ENCODE measurements at regions of chr1 and their contacts with region 1.

Region 1: GRCh38 chr1:31762726-31763670 is 1.1 kb downstream of the ADGRB2 start:
- DNase-seq: peak; percentile 88

Region 2: DNA sequence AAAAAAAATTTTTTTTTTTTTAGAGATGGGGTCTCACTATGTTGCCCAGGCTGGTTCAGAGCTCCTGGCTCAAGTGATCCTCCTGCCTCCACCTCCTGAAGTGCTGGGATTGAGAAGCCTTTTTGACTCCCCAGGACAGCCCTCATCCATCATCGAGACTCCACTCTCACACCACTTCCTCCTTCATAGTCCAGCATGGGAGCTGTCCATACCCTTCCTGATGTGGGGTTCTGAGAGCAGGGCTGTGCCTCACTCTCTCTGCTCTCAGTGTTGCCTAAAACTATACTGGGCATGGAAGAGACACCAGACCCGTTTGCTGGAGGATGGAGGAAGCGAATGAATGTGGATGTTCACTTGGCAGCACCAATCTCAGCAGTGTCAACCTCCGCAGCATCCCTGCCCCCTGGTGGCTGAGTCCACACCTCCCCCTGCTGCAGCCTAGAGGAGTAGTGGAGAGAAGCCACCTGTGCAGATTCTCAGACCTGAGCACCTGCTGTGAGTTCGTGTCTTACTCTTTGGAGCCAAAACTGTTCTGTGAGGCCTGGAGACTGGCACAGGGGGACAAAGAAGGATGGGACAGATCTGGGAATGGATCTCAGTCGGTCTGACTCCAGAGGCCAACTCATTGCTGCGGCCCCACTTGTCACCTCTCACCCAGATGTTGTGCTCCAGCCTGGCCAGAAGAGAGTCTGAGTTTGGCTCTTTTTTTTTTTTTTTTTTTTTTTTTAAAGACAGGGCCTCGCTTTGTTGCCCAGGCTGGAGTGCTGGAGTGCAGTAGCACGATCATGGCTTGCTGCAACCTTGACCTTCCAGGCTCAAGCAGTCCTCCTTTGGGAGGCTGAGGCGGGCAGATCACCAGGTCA is 169.0 kb before region 1 on chr1:
- CTCF ChIA-PET with region 1: no interaction called
- POLR2A ChIA-PET with region 1: no interaction called
- DNase-seq: peak; percentile 91

Region 3: DNA sequence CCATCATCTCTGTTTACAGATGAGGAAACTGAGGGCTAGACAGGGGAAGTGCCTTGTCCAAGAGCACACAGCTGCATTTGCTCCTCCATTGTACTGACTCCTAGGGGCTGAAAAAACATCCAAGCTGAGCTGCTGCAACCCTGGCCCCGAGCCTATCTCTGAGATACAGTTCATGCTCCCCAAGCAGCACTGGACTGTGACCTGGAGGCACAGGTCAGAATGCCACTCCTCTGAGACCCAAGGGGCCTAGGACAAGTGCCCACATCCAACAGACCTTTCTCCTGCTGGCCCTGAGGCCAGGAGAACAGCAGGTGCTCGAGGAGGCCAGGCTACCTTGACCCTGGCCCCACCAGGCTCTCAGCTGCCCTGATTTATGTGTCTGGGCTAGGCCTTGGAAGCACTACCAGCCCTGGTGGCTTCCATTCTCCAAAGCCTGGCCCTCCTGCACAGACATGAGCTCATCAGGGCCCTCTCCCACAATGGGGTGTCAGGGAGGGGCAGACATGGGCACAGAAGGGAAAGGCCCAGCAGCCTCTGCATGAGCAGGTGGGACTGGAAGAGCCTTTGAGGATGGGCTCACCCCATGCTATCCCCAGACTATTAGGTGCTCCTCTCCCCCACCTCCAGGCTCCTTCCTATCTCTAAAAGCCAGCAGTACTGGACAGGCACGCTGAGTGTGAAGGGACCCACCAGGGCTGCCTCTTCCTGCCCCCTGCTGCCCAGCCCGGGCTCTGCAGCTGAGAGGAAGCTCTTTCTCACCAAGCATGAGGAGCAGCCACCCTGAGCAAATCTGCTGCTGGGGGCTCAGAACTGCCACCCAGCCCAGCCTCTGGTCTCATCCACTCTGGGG is 17.7 kb before region 1 on chr1:
- CTCF ChIA-PET with region 1: interaction called, 14 read pairs
- POLR2A ChIA-PET with region 1: no interaction called
- DNase-seq: peak; percentile 95

Measured in HEK293T (cell line).